Brain microvascular endothelial cell (primary cell): ENCODE measurements at regions of chr10 and their contacts with region 1.

Region 1: DNA sequence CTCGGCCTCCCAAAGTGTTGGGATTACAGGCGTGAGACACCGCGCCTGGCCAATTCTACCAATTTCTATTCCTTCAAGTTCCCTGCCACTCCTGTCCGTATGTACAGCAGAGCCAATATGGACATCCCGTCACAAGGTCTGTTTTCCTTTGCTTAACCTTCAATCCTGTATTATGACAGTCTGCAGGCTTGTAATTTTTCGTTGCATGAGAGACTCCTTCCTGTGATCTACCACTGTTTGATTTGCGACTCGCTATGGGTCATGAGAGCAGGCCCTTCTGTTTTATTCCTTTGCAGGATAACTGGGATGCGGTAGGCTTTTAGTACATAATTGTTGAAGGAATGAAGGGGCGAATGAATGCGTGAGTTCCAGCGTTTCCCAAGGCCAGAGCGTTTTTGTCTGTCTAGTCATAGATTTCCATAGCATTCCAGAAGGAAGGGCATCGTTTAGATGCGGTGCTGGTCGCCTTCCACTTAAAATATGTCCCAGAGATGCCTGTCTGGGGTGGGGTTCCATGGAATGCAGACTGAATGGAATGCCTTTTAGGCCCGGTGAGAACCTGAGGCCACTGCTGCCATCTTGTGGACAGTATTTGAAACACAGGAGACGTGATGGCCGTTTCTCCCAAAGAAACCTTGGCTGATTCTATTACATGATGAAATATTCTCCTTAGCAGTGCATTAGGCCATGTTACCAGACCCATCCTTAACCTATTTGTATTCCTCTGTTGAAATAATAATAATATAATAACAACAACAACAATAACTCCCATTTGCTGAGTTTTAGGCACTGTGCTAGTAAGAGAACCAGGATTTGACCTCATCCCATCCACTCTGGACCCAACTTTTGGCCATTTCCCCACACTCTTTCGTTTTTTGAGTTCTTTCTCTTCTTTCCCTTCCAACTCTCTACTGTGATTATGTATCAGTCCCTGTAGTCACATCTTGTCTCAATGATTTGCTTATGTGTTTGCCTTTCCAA is 193.2 kb downstream of the MYOF start:
- DNase-seq: peak; percentile 85
- H3K4me3 ChIP-seq: no peak overlapping the region
- H3K27ac ChIP-seq: no peak overlapping the region
- H3K27me3 ChIP-seq: no peaks in the 10 kb centered on the region
- CTCF ChIP-seq: peak; percentile 83

Region 2: GRCh38 chr10:93115661-93116383 is 173.1 kb before region 1 on chr10:
- in situ Hi-C with region 1: loop called (anchors 25 kb)
- DNase-seq: peak; percentile 37
- H3K4me3 ChIP-seq: no peak overlapping the region
- H3K27ac ChIP-seq: no peak overlapping the region
- H3K27me3 ChIP-seq: no peaks in the 10 kb centered on the region
- CTCF ChIP-seq: peak; percentile 71

Region 3: GRCh38 chr10:93334901-93335327 is 46.0 kb after region 1 on chr10:
- in situ Hi-C with region 1: no loop called
- DNase-seq: no peak
- H3K4me3 ChIP-seq: no peak overlapping the region
- H3K27ac ChIP-seq: no peak overlapping the region
- H3K27me3 ChIP-seq: no peaks in the 10 kb centered on the region
- CTCF ChIP-seq: no peak